ENCODE measurements at regions of chr2 and their contacts with region 1.

Region 1: GRCh38 chr2:175690113-175690837 is 311.8 kb downstream of the LNPK start:
- DNase-seq: no peak
- ATAC-seq: peak; percentile 69 to 85
- H3K4me3 ChIP-seq: no peak overlapping the region
- H3K27ac ChIP-seq: no peak overlapping the region
- H3K4me1 ChIP-seq: no peaks in the 10 kb centered on the region
- H3K27me3 ChIP-seq: peaks cover 0 to 14% (median 2%) of the 10 kb centered on the region in 3 donors
- CTCF ChIP-seq: peak; percentile 68 to 89 (median 82)
- POLR2A ChIP-seq: no peak

Region 2: DNA sequence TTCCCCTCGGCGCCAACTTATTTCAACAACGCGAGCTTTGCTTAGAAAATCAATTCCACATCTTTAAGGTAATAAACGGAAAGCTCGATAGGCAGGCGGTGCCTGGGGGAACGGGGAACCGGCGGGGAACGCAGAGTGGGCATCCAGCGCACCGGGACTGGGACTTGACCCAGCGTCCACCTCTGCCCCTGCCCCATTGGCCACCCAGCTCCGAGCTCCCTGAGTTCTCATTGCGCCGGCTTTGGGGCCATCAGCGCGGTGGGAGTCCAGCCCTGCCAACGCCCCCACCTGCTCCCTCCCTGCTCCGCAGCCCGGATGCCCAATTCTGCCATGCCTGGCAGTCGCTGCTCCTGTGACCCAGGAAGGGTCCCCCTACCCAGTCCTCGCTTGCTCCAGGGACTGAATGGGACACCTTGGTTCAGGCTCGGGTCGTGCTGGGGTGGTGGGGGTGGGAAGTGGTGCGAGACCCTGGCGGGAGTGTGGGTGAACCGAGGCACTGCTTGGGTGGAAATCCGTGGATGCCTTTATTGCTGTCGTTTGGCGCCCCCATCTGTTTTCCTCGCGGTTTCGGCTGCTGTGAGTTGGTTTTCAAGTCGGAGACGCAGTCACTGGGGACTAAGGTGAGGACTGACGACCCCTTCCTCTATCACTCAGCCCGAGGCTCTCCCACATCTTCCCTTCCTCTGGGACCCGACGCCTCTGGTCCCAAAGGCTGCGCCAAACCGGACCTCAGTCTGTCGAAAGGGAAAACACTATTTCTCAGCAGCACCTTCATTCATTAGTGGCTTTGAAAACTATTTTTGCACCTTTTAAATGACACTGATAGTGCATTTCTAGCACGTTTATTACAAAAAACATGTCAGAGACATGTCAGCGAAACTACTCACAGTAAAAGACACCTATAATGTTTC is 395.8 kb after region 1 on chr2:
- in situ Hi-C with region 1: loop called in 1 of 4 experiments (anchors 10 kb)
- intact Hi-C with region 1: loop called (anchors 1 kb)
- DNase-seq: no peak
- ATAC-seq: no peak
- H3K4me3 ChIP-seq: peak overlapping the region in 3 of 4 donors; percentile 13 to 31 (median 28)
- H3K27ac ChIP-seq: no peak overlapping the region
- H3K4me1 ChIP-seq: peaks cover 3 to 19% of the 10 kb centered on the region in 2 donors
- H3K27me3 ChIP-seq: peaks cover 97 to 100% (median 97%) of the 10 kb centered on the region in 3 donors
- CTCF ChIP-seq: peak in 4 of 5 experiments; percentile 29 to 54 (median 46)
- POLR2A ChIP-seq: no peak